Ascending aorta (tissue), 2 donors: ENCODE measurements at regions of chr7 and their contacts with region 1.

Region 1: DNA sequence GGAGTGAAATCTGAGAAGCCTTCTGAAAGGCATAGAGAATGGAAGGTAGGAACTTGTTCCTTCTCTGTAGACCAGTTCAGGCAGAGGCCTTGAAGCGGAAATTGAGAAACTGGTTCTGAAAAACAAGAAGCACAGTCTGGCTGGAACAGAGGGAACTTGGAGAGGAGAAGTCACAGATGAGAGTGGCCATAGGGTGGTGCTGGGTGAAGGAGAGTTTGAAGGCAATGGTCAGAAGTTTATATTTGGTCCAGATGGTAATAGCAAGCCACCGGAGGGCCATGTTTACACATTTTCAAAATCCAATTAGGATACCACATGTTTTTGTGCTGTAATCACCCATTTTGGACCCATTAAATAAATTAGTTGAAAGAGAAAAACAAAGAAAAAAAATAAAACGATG is 692.5 kb downstream of the INHBA start:
- DNase-seq: no peak
- H3K4me3 ChIP-seq: no peak overlapping the region
- H3K27ac ChIP-seq: no peak overlapping the region
- H3K4me1 ChIP-seq: no peaks in the 10 kb centered on the region
- H3K27me3 ChIP-seq: no peaks in the 10 kb centered on the region
- CTCF ChIP-seq: no peak

Region 2: GRCh38 chr7:40959955-40960354 is 50.5 kb before region 1 on chr7:
- intact Hi-C with region 1: loop called (anchors 10 kb)
- DNase-seq: no peak
- H3K4me3 ChIP-seq: no peak overlapping the region
- H3K27ac ChIP-seq: no peak overlapping the region
- H3K4me1 ChIP-seq: no peaks in the 10 kb centered on the region
- H3K27me3 ChIP-seq: no peaks in the 10 kb centered on the region
- CTCF ChIP-seq: no peak